ENCODE measurements at regions of chr16 and their contacts with region 1.

Region 1: DNA sequence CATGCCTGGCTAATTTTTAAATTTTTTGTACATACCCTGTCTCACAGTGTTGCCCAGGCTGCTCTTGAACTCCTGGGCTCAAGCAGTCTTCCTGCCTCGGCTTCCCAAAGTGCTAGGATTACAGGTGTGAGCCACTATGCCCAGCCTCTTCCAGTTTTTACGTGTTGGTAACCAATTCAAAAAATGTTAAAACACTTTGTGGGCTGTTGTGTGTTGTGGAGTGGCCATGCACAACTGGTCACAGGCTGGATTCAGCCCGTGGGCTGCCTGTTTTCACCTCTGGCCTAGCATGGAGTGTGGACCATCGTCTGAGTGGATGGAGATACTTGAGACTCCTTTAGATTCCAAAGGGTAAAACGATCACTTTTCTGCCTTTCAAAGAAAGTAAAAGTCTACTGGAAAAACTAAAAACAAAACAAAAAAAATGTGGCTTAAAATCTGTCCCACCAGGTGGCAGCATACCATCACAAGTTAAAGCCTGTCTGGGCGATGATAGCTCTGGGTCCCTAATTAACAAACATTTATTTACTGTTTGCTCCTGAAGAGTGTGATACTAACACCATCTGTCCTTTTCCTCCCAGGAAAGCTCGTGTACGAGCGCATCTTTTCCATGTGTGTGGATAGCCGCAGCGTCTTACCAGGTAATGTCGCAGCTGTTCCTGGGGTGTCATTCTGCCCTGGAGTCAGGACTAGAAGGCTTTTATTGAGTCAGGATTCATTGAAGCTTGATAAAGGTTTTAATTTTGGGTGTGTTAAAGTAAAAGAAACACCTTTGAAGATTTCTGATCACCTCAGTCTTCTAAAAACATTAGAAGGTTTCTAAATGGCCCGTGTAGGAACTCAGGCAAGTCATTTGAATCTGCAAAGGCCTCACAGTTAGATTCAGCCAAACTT is 45.8 kb downstream of the VPS35L start:
- DNase-seq: no peak
- ATAC-seq: peak; percentile 53
- H3K4me3 Mint-ChIP-seq: no peak overlapping the region
- H3K27ac Mint-ChIP-seq: peak overlapping the region; percentile 84
- H3K4me1 Mint-ChIP-seq: peaks cover 19% of the 10 kb centered on the region
- H3K27me3 Mint-ChIP-seq: no peaks in the 10 kb centered on the region
- CTCF ChIP-seq: peak; percentile 44; the same call in 1 of the 2 replicates

Region 2: GRCh38 chr16:19542138-19542821 is 59.0 kb before region 1 on chr16:
- CTCF ChIA-PET with region 1: no interaction called
- POLR2A ChIA-PET with region 1: no interaction called
- DNase-seq: no peak
- ATAC-seq: no peak
- H3K4me3 Mint-ChIP-seq: no peak overlapping the region
- H3K27ac Mint-ChIP-seq: no peak overlapping the region
- H3K4me1 Mint-ChIP-seq: no peaks in the 10 kb centered on the region
- H3K27me3 Mint-ChIP-seq: no peaks in the 10 kb centered on the region
- CTCF ChIP-seq: no peak

Region 3: GRCh38 chr16:19613834-19614233 is 12.5 kb after region 1 on chr16:
- CTCF ChIA-PET with region 1: interaction called, 12 read pairs
- POLR2A ChIA-PET with region 1: no interaction called
- DNase-seq: no peak
- ATAC-seq: no peak
- H3K4me3 Mint-ChIP-seq: no peak overlapping the region
- H3K27ac Mint-ChIP-seq: no peak overlapping the region
- H3K4me1 Mint-ChIP-seq: no peaks in the 10 kb centered on the region
- H3K27me3 Mint-ChIP-seq: no peaks in the 10 kb centered on the region
- CTCF ChIP-seq: no peak

Region 4: GRCh38 chr16:19632916-19633315 is 31.6 kb after region 1 on chr16:
- CTCF ChIA-PET with region 1: no interaction called
- POLR2A ChIA-PET with region 1: no interaction called
- DNase-seq: no peak
- ATAC-seq: no peak
- H3K4me3 Mint-ChIP-seq: no peak overlapping the region
- H3K27ac Mint-ChIP-seq: no peak overlapping the region; the same call in 1 of the 2 replicates
- H3K4me1 Mint-ChIP-seq: no peaks in the 10 kb centered on the region
- H3K27me3 Mint-ChIP-seq: no peaks in the 10 kb centered on the region
- CTCF ChIP-seq: no peak

Region 5: GRCh38 chr16:19886073-19886941 is 285.0 kb after region 1 on chr16:
- CTCF ChIA-PET with region 1: interaction called, 16 read pairs
- POLR2A ChIA-PET with region 1: no interaction called
- DNase-seq: peak; percentile 87
- ATAC-seq: peak; percentile 8
- H3K4me3 Mint-ChIP-seq: peak overlapping the region; percentile 74
- H3K27ac Mint-ChIP-seq: no peak overlapping the region; the same call in 1 of the 2 replicates
- H3K4me1 Mint-ChIP-seq: peaks cover 31% of the 10 kb centered on the region
- H3K27me3 Mint-ChIP-seq: peaks cover 19% of the 10 kb centered on the region
- CTCF ChIP-seq: peak; percentile 97

Region 6: GRCh38 chr16:19898924-19899604 is 297.7 kb after region 1 on chr16:
- CTCF ChIA-PET with region 1: interaction called, 13 read pairs
- POLR2A ChIA-PET with region 1: no interaction called
- DNase-seq: peak; percentile 75
- ATAC-seq: peak; percentile 79
- H3K4me3 Mint-ChIP-seq: peak overlapping the region; percentile 45
- H3K27ac Mint-ChIP-seq: no peak overlapping the region
- H3K4me1 Mint-ChIP-seq: peaks cover 16% of the 10 kb centered on the region
- H3K27me3 Mint-ChIP-seq: no peaks in the 10 kb centered on the region
- CTCF ChIP-seq: peak; percentile 75

Measured in WTC11 (cell line).